SK-N-SH (cell line): ENCODE measurements at regions of chr6 and their contacts with region 1.

Region 1: GRCh38 chr6:11232193-11232769 is at the start of gene NEDD9:
- DNase-seq: peak; percentile 90
- H3K4me3 ChIP-seq: peak within 1 kb of the TSS; percentile 75 to 91
- H3K27ac ChIP-seq: peak within 1 kb of the TSS; percentile 89 to 90
- H3K4me1 ChIP-seq: peaks cover 27 to 29% of the 10 kb centered on the region in 2 experiments
- H3K27me3 ChIP-seq: no peaks in the 10 kb centered on the region
- CTCF ChIP-seq: peak; percentile 12; the same call in 1 of the 2 replicates
- EP300 ChIP-seq: no peak
- RAD21 ChIP-seq: peak; percentile 17; the same call in 1 of the 2 replicates
- polyA plus RNA-seq, gene NEDD9: 7.4 and 9.9 TPM in 2 replicates

Region 2: GRCh38 chr6:11270030-11271027 is 38.0 kb after region 1 on chr6:
- CTCF ChIA-PET with region 1: interaction called, 4 read pairs
- POLR2A ChIA-PET with region 1: interaction called, 10 read pairs
- DNase-seq: peak; percentile 73
- H3K4me3 ChIP-seq: no peak overlapping the region
- H3K27ac ChIP-seq: peak overlapping the region in 1 of 2 experiments; percentile 98; a peak in 2 of 4 replicates
- H3K4me1 ChIP-seq: peaks cover 0 to 34% of the 10 kb centered on the region in 2 experiments; a peak in 2 of 4 replicates
- H3K27me3 ChIP-seq: no peaks in the 10 kb centered on the region
- CTCF ChIP-seq: no peak
- EP300 ChIP-seq: peak in 1 of 2 experiments; percentile 91; a peak in 2 of 4 replicates
- RAD21 ChIP-seq: peak; percentile 18; the same call in 1 of the 2 replicates